Adrenal gland (tissue), 19 donors: ENCODE measurements at regions of chr5 and their contacts with region 1.

Region 1: DNA sequence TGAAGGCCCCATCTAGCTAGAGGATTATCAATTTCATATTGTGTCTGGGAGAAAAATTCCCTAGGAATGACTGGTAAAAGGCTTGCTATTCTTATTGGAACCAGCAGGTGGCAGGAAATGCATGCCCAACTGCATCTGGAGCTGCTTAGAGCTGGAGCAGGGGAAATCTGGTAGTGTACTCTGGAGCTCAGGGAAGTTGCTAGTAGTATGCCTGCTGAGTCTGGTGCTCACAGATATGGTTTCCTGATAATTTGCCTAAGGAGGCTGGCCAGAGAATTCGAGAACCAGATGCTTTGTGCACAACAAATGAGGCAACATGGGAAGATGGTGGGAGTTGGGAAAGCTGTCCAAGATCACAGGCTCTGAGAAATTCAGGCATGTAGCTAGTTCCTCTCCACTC is 53.7 kb downstream of the G3BP1 start:
- DNase-seq: peak; percentile 60 to 81 (median 62)
- H3K4me3 ChIP-seq: no peak overlapping the region
- H3K27ac ChIP-seq: no peak overlapping the region
- H3K4me1 ChIP-seq: no peaks in the 10 kb centered on the region
- H3K27me3 ChIP-seq: no peaks in the 10 kb centered on the region
- CTCF ChIP-seq: peak; percentile 75 to 88 (median 81)
- POLR2A ChIP-seq: no peak

Region 2: DNA sequence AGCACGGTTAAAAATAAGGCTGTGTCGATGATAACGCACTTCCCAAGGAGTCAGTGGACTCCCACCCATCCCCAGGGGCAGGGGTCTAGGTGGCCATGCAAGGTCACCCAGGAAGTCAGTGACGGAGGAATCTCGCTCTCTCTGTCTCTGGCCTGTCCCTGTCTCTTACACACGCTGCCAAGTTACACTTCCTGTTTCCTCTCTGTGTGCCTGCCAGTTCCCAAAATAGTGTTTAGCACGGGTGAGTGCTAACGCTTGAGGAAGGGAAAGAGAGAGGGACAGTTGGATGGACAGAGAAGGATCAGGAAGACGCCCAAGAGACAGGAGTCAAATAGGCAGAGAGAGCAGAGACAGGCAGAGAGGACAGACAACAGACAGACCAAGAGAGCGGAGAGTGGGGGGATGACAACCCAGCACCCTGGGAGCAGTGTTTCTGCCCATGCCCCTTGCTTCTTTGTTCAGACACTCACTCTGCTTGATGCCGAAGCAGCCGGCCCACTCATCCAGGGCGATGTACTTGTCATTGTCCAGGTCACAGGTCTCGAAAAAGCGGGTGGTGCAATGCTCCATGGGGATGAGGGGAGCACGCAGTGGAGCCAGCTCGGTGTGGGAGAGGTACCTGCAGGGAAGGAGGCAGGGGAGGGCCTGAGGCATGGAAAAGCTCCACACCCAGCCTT is 161.7 kb before region 1 on chr5:
- intact Hi-C with region 1: no loop called
- DNase-seq: peak in 5 of 7 donors; percentile 36 to 74 (median 54)
- H3K4me3 ChIP-seq: no peak overlapping the region
- H3K27ac ChIP-seq: peak overlapping the region in 4 of 5 donors; percentile 30 to 81 (median 58)
- H3K4me1 ChIP-seq: peaks cover 28 to 68% of the 10 kb centered on the region in 2 donors
- H3K27me3 ChIP-seq: no peaks in the 10 kb centered on the region
- CTCF ChIP-seq: no peak
- POLR2A ChIP-seq: no peak

Region 3: DNA sequence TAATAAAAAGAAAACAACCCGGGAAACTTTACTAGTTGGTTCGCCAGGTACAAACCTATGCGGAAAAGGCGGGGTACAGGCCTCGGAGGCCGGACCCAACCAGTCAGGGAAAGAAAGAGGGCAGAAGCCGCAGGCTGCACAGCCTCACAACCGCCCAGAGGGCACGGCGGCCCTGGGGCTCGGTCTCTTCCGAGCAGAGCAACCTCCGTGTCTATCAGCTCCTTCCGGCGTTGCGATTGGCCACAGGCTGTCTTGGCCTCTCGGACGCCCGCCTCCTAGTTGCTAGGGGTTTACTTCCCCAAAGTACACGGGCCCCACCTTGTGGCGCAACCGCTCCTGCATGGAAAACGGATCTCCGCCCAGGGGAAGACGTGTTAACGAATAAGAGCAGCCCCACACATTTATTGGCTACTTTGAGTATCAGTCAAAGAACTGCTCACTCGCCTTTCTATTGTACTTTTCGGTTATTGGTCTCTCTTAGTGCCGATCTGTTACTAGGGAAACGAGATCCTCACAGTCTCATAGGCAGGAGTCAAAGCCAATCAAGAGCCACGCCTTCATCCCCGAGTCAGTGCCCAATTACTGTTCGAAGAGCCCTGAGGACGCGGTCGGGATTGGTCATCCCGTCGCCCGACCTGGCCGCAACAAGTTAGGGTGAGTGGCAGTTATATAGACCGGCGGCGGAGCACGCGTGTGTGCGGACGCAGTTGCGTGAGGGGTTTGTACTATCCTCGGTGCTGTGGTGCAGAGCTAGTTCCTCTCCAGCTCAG is 54.0 kb before region 1 on chr5 and contains the start of gene G3BP1:
- intact Hi-C with region 1: no loop called
- DNase-seq: peak; percentile 100
- H3K4me3 ChIP-seq: peak within 1 kb of the TSS; percentile 12 to 83 (median 81)
- H3K27ac ChIP-seq: peak within 1 kb of the TSS; percentile 94 to 99 (median 97)
- H3K4me1 ChIP-seq: peaks cover 30 to 41% of the 10 kb centered on the region in 2 donors
- H3K27me3 ChIP-seq: no peaks in the 10 kb centered on the region
- CTCF ChIP-seq: peak; percentile 21 to 66 (median 54)
- POLR2A ChIP-seq: peak; percentile 96 to 99
- total RNA-seq, gene G3BP1: 61.4 to 167 (median 130) TPM

Region 4: DNA sequence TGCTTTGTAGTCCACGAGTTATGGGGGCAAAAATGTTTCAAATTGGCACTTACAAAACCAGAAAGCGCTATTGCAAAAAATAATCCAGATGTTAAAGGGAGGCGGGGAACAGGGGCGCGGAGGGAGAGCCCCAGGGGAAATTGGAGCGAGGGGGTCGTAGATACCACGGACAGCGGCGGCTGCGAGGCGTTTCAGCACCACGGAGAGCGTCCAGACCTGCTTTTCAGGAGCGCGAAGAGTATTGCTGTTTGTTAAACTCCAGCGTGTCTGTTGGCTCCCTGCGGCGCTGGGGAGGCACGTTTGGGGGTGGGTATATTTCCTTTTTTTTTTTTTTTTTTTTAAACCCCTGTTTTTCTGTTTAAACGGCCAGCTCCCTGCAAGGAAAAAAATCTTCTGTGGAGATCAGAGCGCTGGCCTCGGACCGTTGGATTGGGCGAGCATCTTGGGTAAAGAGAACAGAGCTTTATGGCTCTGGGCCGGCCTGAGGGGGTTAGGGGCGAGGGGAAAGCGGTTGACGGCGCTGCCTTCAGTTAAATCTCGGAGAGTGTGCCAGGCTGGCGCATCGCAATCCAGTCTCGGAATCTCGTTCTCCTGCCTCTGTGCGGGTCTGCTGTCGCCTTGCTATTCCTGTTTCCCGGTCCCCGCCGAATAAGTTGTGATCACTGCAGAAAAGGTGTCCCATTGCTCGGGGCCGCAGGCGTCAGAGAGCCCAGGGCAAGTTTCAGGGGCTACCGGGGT is 99.3 kb after region 1 on chr5 and contains the start of gene GLRA1:
- intact Hi-C with region 1: no loop called
- DNase-seq: peak; percentile 46 to 69 (median 55)
- H3K4me3 ChIP-seq: no peak within 1 kb of the TSS
- H3K27ac ChIP-seq: no peak within 1 kb of the TSS
- H3K4me1 ChIP-seq: no peaks in the 10 kb centered on the region
- H3K27me3 ChIP-seq: peaks cover 6% of the 10 kb centered on the region
- CTCF ChIP-seq: no peak
- POLR2A ChIP-seq: no peak
- total RNA-seq, gene GLRA1: 0.53 to 2.7 (median 1.4) TPM in 3 of 9 donors, not detected in the others

Region 5: GRCh38 chr5:152113401-152113800 is 288.0 kb after region 1 on chr5:
- intact Hi-C with region 1: no loop called
- DNase-seq: no peak
- H3K4me3 ChIP-seq: no peak overlapping the region
- H3K27ac ChIP-seq: no peak overlapping the region
- H3K4me1 ChIP-seq: no peaks in the 10 kb centered on the region
- H3K27me3 ChIP-seq: no peaks in the 10 kb centered on the region
- CTCF ChIP-seq: no peak
- POLR2A ChIP-seq: no peak

Region 6: GRCh38 chr5:152142840-152143469 is 317.5 kb after region 1 on chr5:
- intact Hi-C with region 1: loop called in 1 of 2 experiments (anchors 10 kb)
- DNase-seq: peak; percentile 30 to 77 (median 59)
- H3K4me3 ChIP-seq: no peak overlapping the region
- H3K27ac ChIP-seq: no peak overlapping the region
- H3K4me1 ChIP-seq: no peaks in the 10 kb centered on the region
- H3K27me3 ChIP-seq: no peaks in the 10 kb centered on the region
- CTCF ChIP-seq: peak; percentile 56 to 86 (median 72)
- POLR2A ChIP-seq: no peak

Region 7: DNA sequence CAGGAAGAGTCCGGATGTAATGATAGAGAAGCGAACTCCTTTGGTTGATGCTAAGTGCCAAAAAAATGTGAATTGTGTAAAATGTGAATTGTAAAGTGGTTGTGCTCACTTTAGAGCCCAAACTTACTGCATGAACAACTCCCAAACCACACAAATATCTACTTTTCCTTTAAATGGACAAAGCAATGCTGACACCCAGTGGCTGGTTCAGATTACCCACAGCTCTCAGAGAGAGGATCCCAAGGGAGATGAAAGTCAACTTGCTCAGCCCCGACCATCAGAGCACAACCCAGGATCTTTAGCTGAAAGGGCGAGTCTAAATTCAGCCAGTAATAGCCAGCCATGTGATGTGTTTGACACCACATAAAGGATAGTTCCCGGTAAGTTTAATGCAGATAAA is 446.0 kb after region 1 on chr5:
- intact Hi-C with region 1: loop called in 1 of 2 experiments (anchors 5 kb)
- DNase-seq: peak; percentile 26 to 73 (median 43)
- H3K4me3 ChIP-seq: no peak overlapping the region
- H3K27ac ChIP-seq: no peak overlapping the region
- H3K4me1 ChIP-seq: no peaks in the 10 kb centered on the region
- H3K27me3 ChIP-seq: no peaks in the 10 kb centered on the region
- CTCF ChIP-seq: peak; percentile 33 to 67 (median 56)
- POLR2A ChIP-seq: no peak

Region 8: GRCh38 chr5:152505442-152506042 is 680.1 kb after region 1 on chr5:
- intact Hi-C with region 1: loop called (anchors 10 kb)
- DNase-seq: peak; percentile 24 to 86 (median 48)
- H3K4me3 ChIP-seq: no peak overlapping the region
- H3K27ac ChIP-seq: no peak overlapping the region
- H3K4me1 ChIP-seq: no peaks in the 10 kb centered on the region
- H3K27me3 ChIP-seq: no peaks in the 10 kb centered on the region
- CTCF ChIP-seq: peak; percentile 41 to 64 (median 56)
- POLR2A ChIP-seq: no peak